B cell (primary cell): ENCODE measurements at regions of chr7 and their contacts with region 1.

Region 1: DNA sequence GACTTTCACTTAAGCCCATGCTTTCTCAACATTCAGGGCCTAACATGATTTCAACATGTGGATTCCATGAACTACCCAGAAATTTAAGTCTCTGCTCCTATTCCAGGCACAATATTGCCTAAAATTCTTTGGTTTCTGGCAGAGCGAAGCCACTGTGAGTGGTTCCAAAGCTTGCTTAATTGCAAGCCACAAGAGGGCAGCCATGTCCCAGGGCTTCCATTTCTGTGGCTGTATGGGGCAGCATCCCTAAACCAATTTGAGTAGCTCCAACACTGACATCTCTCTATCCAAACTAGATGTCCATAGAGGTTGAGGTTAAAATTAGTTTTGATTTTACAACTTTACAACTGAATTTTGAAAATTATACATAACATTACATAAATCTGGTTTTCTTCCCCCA is 56.3 kb upstream of the MDFIC start:
- DNase-seq: peak; percentile 69
- ATAC-seq: peak; percentile 56
- H3K4me3 ChIP-seq: no peak overlapping the region
- H3K4me3 Mint-ChIP-seq: no peak overlapping the region
- H3K27ac ChIP-seq: no peak overlapping the region
- H3K27ac Mint-ChIP-seq: no peak overlapping the region
- H3K4me1 ChIP-seq: no peaks in the 10 kb centered on the region
- H3K4me1 Mint-ChIP-seq: no peaks in the 10 kb centered on the region
- H3K27me3 ChIP-seq: no peaks in the 10 kb centered on the region
- H3K27me3 Mint-ChIP-seq: no peaks in the 10 kb centered on the region
- CTCF ChIP-seq: peak; percentile 85

Region 2: DNA sequence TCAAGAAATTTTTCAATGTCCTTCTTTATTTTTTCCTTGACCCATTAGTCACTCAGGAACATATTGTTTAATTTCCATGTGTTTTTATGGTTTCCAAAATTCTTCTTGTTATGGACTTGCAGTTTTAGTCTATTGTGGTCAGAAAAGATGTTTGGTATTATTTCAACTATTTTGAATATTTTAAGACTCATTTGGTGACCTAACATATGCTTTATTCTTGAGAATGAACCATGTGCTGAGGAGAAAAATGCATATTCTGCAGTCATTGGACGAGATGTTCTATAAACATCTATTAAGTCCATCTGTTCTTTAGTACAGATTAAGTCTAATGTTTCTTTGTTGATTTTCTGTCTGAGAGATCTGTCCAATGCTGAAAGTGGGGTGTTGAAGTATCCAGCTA is 14.0 kb after region 1 on chr7:
- CTCF ChIA-PET with region 1: interaction called, 10 read pairs
- POLR2A ChIA-PET with region 1: no interaction called
- intact Hi-C with region 1: no loop called
- DNase-seq: no peak
- ATAC-seq: no peak
- H3K4me3 ChIP-seq: no peak overlapping the region
- H3K4me3 Mint-ChIP-seq: no peak overlapping the region
- H3K27ac ChIP-seq: no peak overlapping the region
- H3K27ac Mint-ChIP-seq: no peak overlapping the region
- H3K4me1 ChIP-seq: no peaks in the 10 kb centered on the region
- H3K4me1 Mint-ChIP-seq: no peaks in the 10 kb centered on the region
- H3K27me3 ChIP-seq: no peaks in the 10 kb centered on the region
- H3K27me3 Mint-ChIP-seq: no peaks in the 10 kb centered on the region
- CTCF ChIP-seq: no peak

Region 3: GRCh38 chr7:114939484-114940097 is 74.0 kb after region 1 on chr7:
- CTCF ChIA-PET with region 1: interaction called, 87 read pairs
- POLR2A ChIA-PET with region 1: interaction called, 3 read pairs
- intact Hi-C with region 1: loop called (anchors 1 kb)
- DNase-seq: no peak
- ATAC-seq: no peak
- H3K4me3 ChIP-seq: no peak overlapping the region
- H3K4me3 Mint-ChIP-seq: no peak overlapping the region
- H3K27ac ChIP-seq: no peak overlapping the region
- H3K27ac Mint-ChIP-seq: no peak overlapping the region
- H3K4me1 ChIP-seq: peaks cover 17 to 28% of the 10 kb centered on the region in 2 donors
- H3K4me1 Mint-ChIP-seq: peaks cover 48% of the 10 kb centered on the region
- H3K27me3 ChIP-seq: no peaks in the 10 kb centered on the region
- H3K27me3 Mint-ChIP-seq: no peaks in the 10 kb centered on the region
- CTCF ChIP-seq: peak; percentile 51

Region 4: DNA sequence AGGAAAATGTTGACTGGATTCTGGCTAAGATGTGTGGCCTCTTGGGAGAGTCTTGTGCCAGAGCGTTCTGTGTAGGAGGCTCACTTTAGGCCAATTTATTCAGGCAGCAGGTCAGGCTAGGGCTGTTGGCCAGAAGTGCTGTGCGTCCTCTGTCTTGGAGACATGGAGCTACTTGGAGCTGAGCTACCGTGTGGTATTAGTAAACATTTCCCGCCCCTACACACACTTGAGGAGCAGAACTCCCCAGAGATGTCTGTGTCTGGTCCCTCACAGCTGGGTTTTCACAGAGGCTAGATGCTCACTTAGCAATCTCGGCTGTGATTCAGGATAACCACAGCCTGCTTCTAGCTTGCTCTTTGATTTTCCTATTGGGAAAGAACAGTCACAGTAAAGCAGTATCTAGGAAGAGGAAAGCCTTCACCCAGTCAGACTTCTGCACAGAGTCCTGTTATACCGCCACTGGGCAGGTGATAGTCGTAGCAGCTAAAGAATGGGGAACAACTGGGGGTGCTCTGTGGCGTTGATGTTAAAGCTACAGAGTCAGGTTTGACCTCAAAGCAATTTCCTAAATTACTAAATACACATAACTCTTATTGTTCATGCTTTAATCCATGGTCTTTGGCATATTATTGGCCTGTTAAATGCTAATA is 143.0 kb after region 1 on chr7:
- CTCF ChIA-PET with region 1: interaction called, 10 read pairs
- POLR2A ChIA-PET with region 1: no interaction called
- intact Hi-C with region 1: no loop called
- DNase-seq: peak; percentile 23
- ATAC-seq: peak; percentile 57
- H3K4me3 ChIP-seq: no peak overlapping the region
- H3K4me3 Mint-ChIP-seq: peak overlapping the region; percentile 57
- H3K27ac ChIP-seq: peak overlapping the region in 1 of 2 donors; percentile 38
- H3K27ac Mint-ChIP-seq: peak overlapping the region; percentile 84
- H3K4me1 ChIP-seq: peaks cover 19% of the 10 kb centered on the region in 2 donors
- H3K4me1 Mint-ChIP-seq: peaks cover 24% of the 10 kb centered on the region
- H3K27me3 ChIP-seq: no peaks in the 10 kb centered on the region
- H3K27me3 Mint-ChIP-seq: no peaks in the 10 kb centered on the region
- CTCF ChIP-seq: no peak

Region 5: DNA sequence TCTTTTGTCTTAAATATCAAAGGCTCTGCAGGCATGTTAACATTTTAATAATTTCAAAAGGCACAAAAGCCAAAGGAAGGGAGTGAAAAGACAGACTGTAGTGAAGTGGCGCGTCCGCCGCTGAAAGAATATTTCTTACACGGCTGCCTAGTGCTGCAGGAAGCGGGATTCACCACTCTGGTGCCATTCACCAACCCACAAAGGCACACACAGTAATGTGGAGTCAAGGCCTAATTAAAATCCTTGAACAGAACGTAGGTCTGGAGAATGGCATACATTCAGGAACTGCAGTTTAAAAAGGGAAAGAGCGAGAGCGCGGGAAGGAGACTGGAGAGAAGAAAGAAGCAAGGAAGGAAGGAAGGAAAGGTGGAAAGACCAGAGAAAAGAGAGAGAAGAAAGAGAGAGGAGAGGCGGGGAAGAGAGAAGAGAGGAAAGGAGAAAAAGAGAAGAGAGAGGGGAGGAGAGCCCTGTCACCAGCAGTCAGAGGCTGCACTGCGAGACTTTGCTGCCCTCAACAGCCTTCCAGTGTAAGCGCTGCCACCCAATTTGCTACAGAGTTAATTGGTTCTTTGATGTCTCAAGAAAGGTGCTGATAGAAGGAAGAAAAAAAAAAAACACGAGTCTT is 610.3 kb after region 1 on chr7:
- CTCF ChIA-PET with region 1: interaction called, 10 read pairs
- POLR2A ChIA-PET with region 1: no interaction called
- intact Hi-C with region 1: loop called (anchors 1 kb)
- DNase-seq: peak; percentile 39
- ATAC-seq: no peak
- H3K4me3 ChIP-seq: no peak overlapping the region
- H3K4me3 Mint-ChIP-seq: no peak overlapping the region
- H3K27ac ChIP-seq: no peak overlapping the region
- H3K27ac Mint-ChIP-seq: no peak overlapping the region
- H3K4me1 ChIP-seq: peaks cover 12 to 16% of the 10 kb centered on the region in 2 donors
- H3K4me1 Mint-ChIP-seq: peaks cover 11% of the 10 kb centered on the region
- H3K27me3 ChIP-seq: peaks cover 0 to 27% (median 13%) of the 10 kb centered on the region in 4 experiments
- H3K27me3 Mint-ChIP-seq: peaks cover 39% of the 10 kb centered on the region
- CTCF ChIP-seq: peak; percentile 28

Region 6: DNA sequence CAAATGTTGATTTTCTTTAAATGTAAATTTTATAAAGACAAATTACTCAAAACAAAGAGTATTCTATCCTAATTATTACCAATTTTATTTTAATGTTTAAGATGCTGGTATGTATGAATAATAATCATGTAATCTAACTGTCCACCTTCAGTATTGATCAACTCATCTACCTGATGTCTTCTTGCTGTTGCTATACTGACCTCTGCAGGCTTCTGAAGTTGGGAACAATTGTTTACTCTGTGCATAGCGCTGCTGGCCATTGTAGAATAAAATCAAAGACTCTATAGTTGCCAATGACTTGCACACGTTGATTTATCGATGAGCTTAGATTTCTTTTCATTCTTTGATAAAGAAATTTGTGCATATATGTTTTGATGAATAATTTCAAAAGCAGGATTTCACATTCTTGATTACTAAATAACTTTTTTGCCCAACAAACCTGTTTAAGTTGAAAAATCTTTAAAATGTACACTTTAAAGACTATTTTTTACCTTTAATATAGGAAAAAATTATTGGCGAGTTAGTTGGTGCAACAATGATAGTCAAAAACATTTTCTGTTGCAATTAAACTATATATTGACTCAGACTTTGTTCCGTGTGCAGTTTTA is 882.7 kb after region 1 on chr7:
- CTCF ChIA-PET with region 1: interaction called, 3 read pairs
- POLR2A ChIA-PET with region 1: no interaction called
- intact Hi-C with region 1: loop called (anchors 5 kb)
- DNase-seq: no peak
- ATAC-seq: no peak
- H3K4me3 ChIP-seq: no peak overlapping the region
- H3K4me3 Mint-ChIP-seq: no peak overlapping the region
- H3K27ac ChIP-seq: no peak overlapping the region
- H3K27ac Mint-ChIP-seq: no peak overlapping the region
- H3K4me1 ChIP-seq: no peaks in the 10 kb centered on the region
- H3K4me1 Mint-ChIP-seq: no peaks in the 10 kb centered on the region
- H3K27me3 ChIP-seq: no peaks in the 10 kb centered on the region
- H3K27me3 Mint-ChIP-seq: no peaks in the 10 kb centered on the region
- CTCF ChIP-seq: no peak

Region 7: DNA sequence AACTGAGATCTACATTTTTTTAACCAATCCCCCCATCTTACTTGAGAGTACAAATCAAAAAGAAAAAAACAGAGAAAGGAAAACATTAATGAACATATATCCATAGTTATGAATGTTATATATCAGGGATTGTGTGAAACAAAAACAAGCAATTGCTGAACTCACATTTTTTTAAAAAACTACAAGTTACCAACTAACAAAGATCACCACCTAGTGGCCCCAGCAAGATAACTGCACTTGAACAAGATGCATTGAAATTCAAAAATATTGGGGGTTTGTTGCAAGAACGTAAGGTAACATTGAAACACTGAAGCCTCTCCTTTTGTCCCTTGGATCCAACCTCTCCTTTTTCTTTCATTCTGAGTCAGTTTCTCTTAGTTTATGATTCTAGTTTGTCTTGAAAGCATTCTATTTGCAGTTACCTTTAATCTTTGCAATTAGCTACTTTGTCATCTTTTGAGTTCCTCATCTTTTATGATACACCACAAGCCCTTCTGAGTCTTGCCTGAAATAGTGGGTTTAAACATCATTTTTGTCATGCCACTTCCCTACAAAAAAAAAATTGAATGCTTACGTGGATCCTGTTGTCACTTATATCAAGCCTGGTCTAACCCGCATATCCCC is 1257.5 kb after region 1 on chr7:
- CTCF ChIA-PET with region 1: interaction called, 3 read pairs
- POLR2A ChIA-PET with region 1: no interaction called
- intact Hi-C with region 1: loop called (anchors 2 kb)
- DNase-seq: peak; percentile 24
- ATAC-seq: no peak
- H3K4me3 ChIP-seq: no peak overlapping the region
- H3K4me3 Mint-ChIP-seq: no peak overlapping the region
- H3K27ac ChIP-seq: no peak overlapping the region
- H3K27ac Mint-ChIP-seq: no peak overlapping the region
- H3K4me1 ChIP-seq: no peaks in the 10 kb centered on the region
- H3K4me1 Mint-ChIP-seq: no peaks in the 10 kb centered on the region
- H3K27me3 ChIP-seq: no peaks in the 10 kb centered on the region
- H3K27me3 Mint-ChIP-seq: no peaks in the 10 kb centered on the region
- CTCF ChIP-seq: peak; percentile 80